HEK293T (cell line): ENCODE measurements at regions of chr16 and their contacts with region 1.

Region 1: GRCh38 chr16:58121132-58121531 is 8.0 kb downstream of the CFAP20 start:
- DNase-seq: no peak

Region 2: DNA sequence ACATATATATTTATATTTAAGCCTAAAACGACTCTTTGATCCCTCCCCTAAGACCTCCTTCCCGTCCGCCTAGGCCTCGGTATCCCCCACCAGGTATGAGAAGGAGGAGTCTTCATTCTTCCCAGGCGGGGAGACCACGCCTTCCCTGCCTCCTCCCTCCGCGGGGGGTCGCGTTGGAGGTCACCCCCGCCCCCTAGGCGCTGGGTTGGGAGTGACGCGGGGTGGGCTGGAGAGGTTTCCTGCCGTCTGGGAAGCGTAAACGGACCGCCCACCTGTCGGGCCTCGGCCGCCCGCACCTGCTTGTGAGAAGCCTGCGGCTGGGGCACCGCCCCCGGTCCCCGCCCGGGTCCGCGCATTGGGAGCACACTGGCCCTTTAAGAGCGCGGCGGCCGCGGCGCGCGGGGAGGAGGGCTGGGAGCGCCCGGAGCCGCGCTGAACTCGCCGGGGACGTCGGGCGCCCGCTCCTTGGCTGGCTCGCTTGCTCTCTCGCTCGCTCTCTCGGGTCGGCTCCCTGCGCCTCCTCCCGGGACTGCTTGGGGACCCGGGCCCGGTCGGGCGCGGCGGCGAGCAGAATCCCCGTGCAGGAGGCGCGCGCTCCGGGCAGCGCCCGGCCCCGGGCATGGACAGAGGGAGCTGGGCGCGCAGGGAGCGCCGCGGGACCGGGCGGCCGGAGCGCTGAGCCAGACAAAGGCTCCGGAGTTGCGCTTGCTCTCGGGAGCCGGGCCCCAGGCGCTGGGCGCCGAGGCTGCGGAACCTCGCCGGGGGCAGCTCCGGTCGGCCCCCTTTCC is 95.6 kb before region 1 on chr16 and contains the start of gene MMP15:
- CTCF ChIA-PET with region 1: interaction called, 12 read pairs
- POLR2A ChIA-PET with region 1: interaction called, 5 read pairs
- DNase-seq: peak; percentile 76

Region 3: GRCh38 chr16:58032710-58033293 is 88.3 kb before region 1 on chr16:
- CTCF ChIA-PET with region 1: interaction called, 10 read pairs
- POLR2A ChIA-PET with region 1: interaction called, 3 read pairs
- DNase-seq: no peak